Posterior vena cava (tissue), 2 donors: ENCODE measurements at regions of chr14 and their contacts with region 1.

Region 1: DNA sequence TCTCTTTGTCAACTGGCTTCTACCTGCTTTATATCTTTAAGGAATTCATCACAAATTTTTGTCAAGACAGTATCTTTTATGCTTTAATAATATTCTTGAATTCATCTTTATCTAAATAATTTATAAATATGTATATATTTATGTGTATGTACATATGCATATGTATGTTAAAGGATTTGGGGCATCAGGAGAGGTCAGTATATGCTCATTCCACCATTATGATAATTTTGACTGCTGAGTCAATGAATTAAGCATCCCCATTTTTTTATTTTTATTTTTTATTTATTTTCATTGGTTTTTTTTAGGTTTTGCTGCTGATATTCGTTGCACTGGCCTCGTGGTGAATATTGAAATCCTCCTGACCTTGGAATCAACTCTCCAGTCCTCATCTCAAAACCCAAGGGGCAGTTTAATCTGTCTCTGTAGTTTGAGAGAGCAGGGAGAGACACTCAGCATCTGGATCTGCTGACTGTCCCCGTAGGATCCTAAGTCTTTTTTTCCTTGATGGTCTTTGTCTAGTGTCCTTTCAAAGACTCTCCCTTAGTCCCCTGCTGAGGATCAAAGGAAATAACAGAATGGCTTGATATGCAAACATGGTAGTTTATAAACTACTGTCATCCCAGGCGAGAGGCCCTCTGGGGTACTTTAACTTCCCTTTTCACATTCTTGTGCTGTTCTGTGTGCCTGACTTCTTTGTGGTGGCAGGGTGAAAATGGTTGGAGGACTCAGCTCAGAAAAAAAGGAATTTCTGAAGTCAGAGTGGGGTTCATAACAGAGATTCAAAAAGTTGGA is 218.7 kb downstream of the DIO2 start:
- DNase-seq: no peak

Region 2: DNA sequence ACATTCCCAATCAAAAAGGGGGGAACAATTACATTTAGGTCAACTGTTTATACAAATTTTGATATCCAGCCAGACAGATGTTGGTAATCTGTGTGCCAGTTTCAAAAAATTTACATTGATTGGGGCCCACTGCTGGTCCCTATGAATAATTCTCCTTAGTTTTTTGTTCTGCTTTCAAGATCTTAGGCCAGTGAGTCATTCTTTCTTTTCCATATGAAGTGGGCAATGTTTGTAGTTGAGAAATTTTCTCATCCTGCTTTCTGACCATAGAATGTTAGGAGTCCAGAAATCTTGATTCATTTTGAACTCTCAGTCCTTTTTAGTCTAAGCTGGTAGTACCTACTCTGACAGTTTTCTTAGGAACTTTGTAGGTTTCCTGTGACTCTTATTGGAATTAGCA is 25.6 kb before region 1 on chr14:
- intact Hi-C with region 1: no loop called
- DNase-seq: no peak

Region 3: GRCh38 chr14:80005561-80005960 is 13.0 kb after region 1 on chr14:
- intact Hi-C with region 1: loop called in 1 of 2 experiments (anchors 1 kb)
- DNase-seq: no peak

Region 4: DNA sequence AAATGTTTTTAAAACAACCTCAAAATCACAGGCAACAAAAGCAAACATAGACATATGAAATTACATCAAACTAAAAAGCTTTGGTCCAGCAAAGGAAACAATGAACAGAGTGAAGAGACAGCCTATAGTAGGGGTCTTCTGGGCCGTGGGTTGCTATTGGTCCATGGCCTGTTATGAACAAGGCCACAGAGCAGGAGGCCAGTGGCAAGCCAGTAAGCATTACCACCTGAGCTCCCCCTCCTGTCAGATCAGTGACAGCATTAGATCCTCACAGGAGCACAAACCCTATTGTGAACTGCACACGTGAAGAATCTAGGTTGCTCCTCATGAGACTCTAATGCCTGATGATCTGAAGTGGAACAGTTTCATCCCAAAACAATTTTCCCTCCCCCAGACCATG is 44.7 kb after region 1 on chr14:
- intact Hi-C with region 1: no loop called
- DNase-seq: no peak